GM18951 (cell line): ENCODE measurements at regions of chr2 and their contacts with region 1.

Region 1: GRCh38 chr2:218860950-218861381 is 1.4 kb downstream of the WNT6 start:
- POLR2A ChIP-seq: no peak

Region 2: GRCh38 chr2:218648088-218648786 is 212.7 kb before region 1 on chr2:
- in situ Hi-C with region 1: no loop called
- POLR2A ChIP-seq: no peak

Region 3: GRCh38 chr2:218979846-218980734 is 119.1 kb after region 1 on chr2:
- in situ Hi-C with region 1: loop called (anchors 10 kb)
- POLR2A ChIP-seq: no peak